Activated CD4-positive, alpha-beta T cell treated with anti-CD3 and anti-CD28 coated beads, Interleukin-2, amount 10 ng/mL, durations not matched to agents 24 days and 14 days (primary cell): ENCODE measurements at regions of chr1 and their contacts with region 1.

Region 1: GRCh38 chr1:155172732-155173477 is at the start of gene KRTCAP2:
- DNase-seq: peak; percentile 98
- H3K4me3 Mint-ChIP-seq: peak within 1 kb of the TSS; percentile 99
- H3K27ac Mint-ChIP-seq: peak within 1 kb of the TSS; percentile 99
- H3K4me1 Mint-ChIP-seq: peaks cover 51% of the 10 kb centered on the region
- H3K27me3 Mint-ChIP-seq: peaks cover 6% of the 10 kb centered on the region
- total RNA-seq, gene KRTCAP2: 244 and 245 TPM in 2 replicates

Region 2: DNA sequence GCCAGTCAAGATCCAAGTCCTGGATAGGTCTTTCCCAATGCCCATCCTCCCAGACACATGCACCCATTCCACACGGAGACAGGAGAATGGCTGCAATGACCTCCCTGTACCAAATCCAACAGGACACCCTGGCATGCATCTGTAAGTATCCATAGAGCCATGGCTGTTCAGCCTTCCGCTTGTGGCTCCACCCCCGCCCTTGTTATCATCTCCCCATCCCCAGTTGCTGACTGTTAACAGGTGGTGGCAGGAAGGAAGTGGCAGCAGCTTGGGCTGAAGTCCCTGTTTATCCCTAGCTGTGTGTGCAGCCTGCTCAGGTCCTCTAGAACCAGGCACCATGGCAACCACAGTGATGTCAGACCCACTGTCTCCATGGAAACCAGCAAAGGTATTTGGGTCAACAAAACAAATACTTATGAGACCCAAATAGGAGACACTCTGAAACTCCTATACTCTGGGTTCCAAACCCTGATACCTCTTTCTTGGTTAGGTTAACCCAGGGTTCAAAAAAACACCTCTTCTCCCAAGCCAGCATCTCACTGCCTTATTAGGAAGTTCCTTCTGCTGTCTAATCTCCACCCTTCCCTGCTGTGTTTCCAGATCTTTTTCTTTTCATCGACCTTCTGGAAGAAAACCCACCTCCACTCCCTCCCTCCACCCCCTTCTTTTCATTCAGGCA is 217.7 kb before region 1 on chr1:
- intact Hi-C with region 1: no loop called
- DNase-seq: peak; percentile 98
- H3K4me3 Mint-ChIP-seq: peak overlapping the region; percentile 87
- H3K27ac Mint-ChIP-seq: peak overlapping the region; percentile 96
- H3K4me1 Mint-ChIP-seq: peaks cover 64% of the 10 kb centered on the region
- H3K27me3 Mint-ChIP-seq: no peaks in the 10 kb centered on the region

Region 3: DNA sequence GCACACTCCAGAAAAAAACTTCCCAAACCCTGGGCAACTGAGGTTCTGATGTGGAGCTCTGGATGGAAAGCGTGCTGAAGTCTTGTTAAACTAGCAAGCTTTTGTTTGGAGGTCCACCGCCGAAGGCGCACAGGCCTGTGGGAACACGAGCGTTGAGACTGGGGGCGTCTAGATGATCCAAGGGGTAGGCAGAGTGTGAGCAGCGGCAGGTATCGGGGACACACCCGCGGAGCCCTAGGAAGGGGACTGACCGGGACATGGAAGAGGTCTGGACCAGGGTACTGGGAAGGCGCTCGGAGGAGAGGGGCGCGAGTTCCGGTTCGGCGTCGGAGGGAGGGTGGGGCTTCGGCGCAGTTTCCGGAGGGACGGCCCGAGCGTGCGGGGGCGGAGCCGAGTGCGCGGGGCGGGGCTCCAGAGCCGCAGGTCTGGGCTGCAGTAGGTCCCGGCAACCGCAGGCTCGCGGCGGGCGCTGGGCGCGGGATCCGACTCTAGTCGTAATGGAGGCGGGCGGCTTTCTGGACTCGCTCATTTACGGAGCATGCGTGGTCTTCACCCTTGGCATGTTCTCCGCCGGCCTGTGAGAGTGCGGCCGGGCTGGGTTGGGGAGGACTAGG is 37.4 kb before region 1 on chr1 and contains the start of gene SLC50A1:
- intact Hi-C with region 1: loop called (anchors 2 kb)
- DNase-seq: peak; percentile 98
- H3K4me3 Mint-ChIP-seq: peak within 1 kb of the TSS; percentile 98
- H3K27ac Mint-ChIP-seq: peak within 1 kb of the TSS; percentile 98
- H3K4me1 Mint-ChIP-seq: peaks cover 44% of the 10 kb centered on the region
- H3K27me3 Mint-ChIP-seq: peaks cover 7% of the 10 kb centered on the region
- total RNA-seq, gene SLC50A1: 46.2 and 46.3 TPM in 2 replicates

Region 4: GRCh38 chr1:155193275-155193990 is 20.5 kb after region 1 on chr1:
- intact Hi-C with region 1: loop called (anchors 1 kb)
- DNase-seq: peak; percentile 94
- H3K4me3 Mint-ChIP-seq: peak overlapping the region; percentile 97
- H3K27ac Mint-ChIP-seq: peak overlapping the region; percentile 100
- H3K4me1 Mint-ChIP-seq: peaks cover 34% of the 10 kb centered on the region
- H3K27me3 Mint-ChIP-seq: no peaks in the 10 kb centered on the region

Region 5: DNA sequence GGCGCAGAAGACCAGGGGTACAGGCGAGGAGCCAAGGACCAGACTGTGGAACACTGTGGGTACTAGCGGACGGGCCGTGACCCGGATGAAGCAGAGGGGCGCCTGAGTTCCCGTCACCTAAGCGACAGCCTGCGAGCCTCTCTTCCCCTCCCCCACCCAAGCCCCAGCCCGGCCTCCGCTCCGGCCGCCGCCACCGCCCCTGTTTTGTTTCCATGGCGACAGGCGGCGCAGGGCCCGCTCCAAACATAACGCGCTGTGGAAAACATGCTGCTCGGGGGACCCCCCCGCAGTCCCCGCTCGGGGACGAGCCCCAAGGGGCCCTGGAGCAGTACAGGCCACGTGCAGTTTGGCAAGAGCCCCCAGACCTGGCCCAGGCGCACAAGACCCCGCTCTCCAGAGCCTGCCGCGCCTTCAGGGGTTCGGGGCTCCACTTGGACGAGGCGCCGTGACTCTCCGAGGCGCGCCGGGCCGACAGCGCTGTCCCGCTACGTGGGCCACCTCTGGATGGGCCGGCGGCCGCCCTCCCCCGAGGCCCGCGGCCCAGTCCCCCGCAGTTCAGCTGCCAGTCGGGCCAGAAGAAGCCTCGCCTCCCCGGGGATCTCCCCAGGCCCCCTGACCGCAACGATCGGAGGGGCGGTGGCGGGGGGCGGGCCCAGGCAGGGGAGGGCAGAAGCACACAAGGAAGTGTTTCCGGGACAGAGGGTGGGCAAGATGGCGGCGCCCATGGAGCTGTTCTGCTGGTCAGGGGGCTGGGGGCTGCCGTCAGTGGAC is 35.8 kb after region 1 on chr1 and contains the start of gene MTX1:
- intact Hi-C with region 1: no loop called
- DNase-seq: peak; percentile 97
- H3K4me3 Mint-ChIP-seq: peak within 1 kb of the TSS; percentile 95
- H3K27ac Mint-ChIP-seq: peak within 1 kb of the TSS; percentile 93
- H3K4me1 Mint-ChIP-seq: peaks cover 26% of the 10 kb centered on the region
- H3K27me3 Mint-ChIP-seq: no peaks in the 10 kb centered on the region
- total RNA-seq, gene MTX1: 62.4 and 64.7 TPM in 2 replicates